CD4-positive, alpha-beta memory T cell (primary cell): ENCODE measurements at regions of chr14 and their contacts with region 1.

Region 1: GRCh38 chr14:35261774-35262173 is 30.4 kb upstream of the PSMA6 start:
- DNase-seq: no peak
- H3K4me3 ChIP-seq: no peak overlapping the region
- H3K4me3 Mint-ChIP-seq: no peak overlapping the region
- H3K27ac ChIP-seq: no peak overlapping the region
- H3K27ac Mint-ChIP-seq: peak overlapping the region in 2 of 7 donors; percentile 29 to 76
- H3K4me1 ChIP-seq: no peaks in the 10 kb centered on the region
- H3K4me1 Mint-ChIP-seq: peaks cover 0 to 7% (median under 1%) of the 10 kb centered on the region in 4 donors
- H3K27me3 ChIP-seq: no peaks in the 10 kb centered on the region
- H3K27me3 Mint-ChIP-seq: no peaks in the 10 kb centered on the region

Region 2: DNA sequence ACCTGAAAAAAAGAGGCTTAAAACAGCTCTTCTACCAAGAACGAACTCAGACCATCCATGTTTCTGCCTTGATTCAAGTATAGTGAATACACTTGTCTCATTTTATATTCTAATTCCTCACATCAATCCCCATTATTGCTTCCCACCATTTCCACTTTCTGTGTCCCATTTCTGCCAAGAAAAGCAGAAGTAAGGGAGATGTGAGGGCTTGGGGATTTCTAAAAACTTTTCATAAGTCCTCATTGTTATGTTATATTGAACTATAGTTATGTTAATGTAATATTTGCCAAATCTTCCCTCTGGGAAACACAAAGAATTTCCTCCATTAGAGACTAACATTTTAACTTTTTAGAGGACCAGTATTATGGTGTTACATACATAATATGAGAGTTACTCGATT is 17.8 kb before region 1 on chr14:
- CTCF ChIA-PET with region 1: no interaction called
- POLR2A ChIA-PET with region 1: no interaction called
- intact Hi-C with region 1: loop called (anchors 2 kb)
- DNase-seq: no peak
- H3K4me3 ChIP-seq: no peak overlapping the region
- H3K4me3 Mint-ChIP-seq: no peak overlapping the region
- H3K27ac ChIP-seq: no peak overlapping the region
- H3K27ac Mint-ChIP-seq: no peak overlapping the region
- H3K4me1 ChIP-seq: no peaks in the 10 kb centered on the region
- H3K4me1 Mint-ChIP-seq: peaks cover 17 to 22% (median 19%) of the 10 kb centered on the region in 4 donors
- H3K27me3 ChIP-seq: no peaks in the 10 kb centered on the region
- H3K27me3 Mint-ChIP-seq: no peaks in the 10 kb centered on the region

Region 3: DNA sequence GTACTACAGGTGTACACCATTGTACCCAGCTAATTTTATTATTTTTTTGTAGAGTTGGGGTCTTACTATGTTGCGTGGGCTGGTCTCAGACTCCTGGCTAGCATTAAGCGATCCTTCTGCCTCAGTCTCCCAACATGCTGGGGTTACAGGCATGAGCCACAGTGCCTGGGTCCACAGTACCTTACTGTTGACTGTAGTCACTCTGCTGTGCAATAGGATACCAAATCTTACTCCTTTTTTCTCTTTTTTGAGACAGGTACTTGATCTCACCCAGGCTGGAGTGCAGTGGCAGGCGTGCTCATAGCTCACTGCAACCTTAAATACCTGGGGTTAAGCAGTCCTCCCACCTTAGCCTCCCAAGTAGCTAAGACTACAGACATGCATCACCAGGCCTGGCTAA is 56.0 kb after region 1 on chr14:
- CTCF ChIA-PET with region 1: no interaction called
- POLR2A ChIA-PET with region 1: no interaction called
- intact Hi-C with region 1: no loop called
- DNase-seq: no peak
- H3K4me3 ChIP-seq: no peak overlapping the region
- H3K4me3 Mint-ChIP-seq: no peak overlapping the region
- H3K27ac ChIP-seq: no peak overlapping the region
- H3K27ac Mint-ChIP-seq: peak overlapping the region in 1 of 7 donors; percentile 74
- H3K4me1 ChIP-seq: no peaks in the 10 kb centered on the region
- H3K4me1 Mint-ChIP-seq: peaks cover 0 to 4% (median 0%) of the 10 kb centered on the region in 4 donors
- H3K27me3 ChIP-seq: no peaks in the 10 kb centered on the region
- H3K27me3 Mint-ChIP-seq: no peaks in the 10 kb centered on the region